Activated B cell treated with CpG ODN at 0.5 μM for 24 hours (primary cell): ENCODE measurements at regions of chr6 and their contacts with region 1.

Region 1: GRCh38 chr6:30730601-30731435 is 10.7 kb downstream of the TUBB start:
- DNase-seq: peak; percentile 69
- ATAC-seq: peak; percentile 89
- H3K4me3 Mint-ChIP-seq: peak overlapping the region; percentile 41
- H3K27ac Mint-ChIP-seq: no peak overlapping the region
- H3K4me1 Mint-ChIP-seq: peaks cover 27% of the 10 kb centered on the region
- H3K27me3 Mint-ChIP-seq: no peaks in the 10 kb centered on the region
- CTCF ChIP-seq: peak; percentile 23

Region 2: DNA sequence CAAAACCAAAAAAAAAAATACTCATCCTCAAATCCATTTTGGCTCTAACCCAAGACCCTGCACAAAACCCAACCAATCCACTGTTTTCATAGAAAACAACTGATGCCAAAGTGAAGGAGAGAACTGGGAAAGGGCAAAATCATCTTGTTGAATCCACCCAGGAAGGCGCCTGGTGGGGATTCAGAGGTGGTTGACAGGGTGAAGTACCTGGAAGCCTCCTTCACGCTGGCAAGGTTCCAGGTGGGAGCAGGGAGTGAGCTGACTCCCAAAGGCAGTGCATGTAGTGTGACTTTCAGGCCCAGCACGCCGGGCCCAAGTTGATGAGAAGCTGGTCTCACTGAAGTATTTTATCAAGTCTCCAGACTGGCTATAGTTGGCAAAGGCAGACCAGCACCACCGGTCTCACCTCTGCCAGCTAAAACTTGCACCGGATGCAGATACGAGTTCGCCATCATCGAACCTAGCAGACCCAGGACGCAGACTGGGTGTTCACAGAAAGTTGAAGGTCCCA is 130.3 kb before region 1 on chr6:
- CTCF ChIA-PET with region 1: interaction called, 15 read pairs
- POLR2A ChIA-PET with region 1: no interaction called
- intact Hi-C with region 1: no loop called
- DNase-seq: no peak
- ATAC-seq: no peak
- H3K4me3 Mint-ChIP-seq: no peak overlapping the region
- H3K27ac Mint-ChIP-seq: no peak overlapping the region
- H3K4me1 Mint-ChIP-seq: peaks cover 9% of the 10 kb centered on the region
- H3K27me3 Mint-ChIP-seq: no peaks in the 10 kb centered on the region
- CTCF ChIP-seq: no peak

Region 3: DNA sequence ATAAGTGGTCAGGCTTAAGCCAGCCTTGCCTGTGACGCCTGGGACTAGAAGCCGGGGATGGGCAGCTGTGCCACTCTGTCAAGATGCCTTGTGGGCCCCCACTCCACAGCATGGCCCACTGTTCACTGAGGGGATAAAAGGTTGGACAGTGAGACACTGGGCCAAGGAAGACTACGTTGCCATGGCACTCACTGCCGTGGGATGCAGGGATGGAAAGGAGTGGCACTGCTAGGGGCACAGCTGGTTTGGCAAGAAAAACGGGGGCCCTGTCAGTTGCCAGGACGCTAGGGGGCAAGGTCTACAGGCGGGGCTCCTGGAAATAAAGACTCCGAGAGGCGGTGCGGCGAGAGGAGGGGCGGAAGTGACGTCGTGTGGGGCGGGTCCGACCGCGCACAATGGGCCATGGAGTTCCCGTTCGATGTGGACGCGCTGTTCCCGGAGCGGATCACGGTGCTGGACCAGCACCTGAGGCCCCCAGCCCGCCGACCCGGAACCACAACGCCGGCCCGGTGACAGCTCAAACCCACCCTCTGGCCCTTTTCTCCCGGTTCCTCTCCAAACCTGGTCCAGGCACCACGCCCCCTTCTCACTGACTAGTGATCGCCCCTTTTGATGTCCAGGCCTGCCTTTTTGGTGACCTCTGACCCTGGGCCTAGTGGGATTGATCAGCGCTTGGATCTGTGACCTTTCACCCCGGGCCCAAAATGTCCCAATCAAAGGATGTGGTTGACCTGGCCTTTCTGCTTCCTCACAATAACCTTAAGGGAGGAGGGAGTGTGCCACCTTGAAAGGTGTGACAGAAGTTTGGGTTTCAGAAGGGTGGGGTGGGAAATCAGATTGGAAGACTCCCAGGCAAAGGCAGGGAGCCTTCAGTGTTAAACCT is 104.1 kb before region 1 on chr6 and contains the start of gene ATAT1:
- CTCF ChIA-PET with region 1: interaction called, 11 read pairs
- POLR2A ChIA-PET with region 1: interaction called, 6 read pairs
- intact Hi-C with region 1: no loop called
- DNase-seq: peak; percentile 86
- ATAC-seq: peak; percentile 99
- H3K4me3 Mint-ChIP-seq: peak within 1 kb of the TSS; percentile 90
- H3K27ac Mint-ChIP-seq: peak within 1 kb of the TSS; percentile 89
- H3K4me1 Mint-ChIP-seq: peaks cover 21% of the 10 kb centered on the region
- H3K27me3 Mint-ChIP-seq: no peaks in the 10 kb centered on the region
- CTCF ChIP-seq: no peak
- total RNA-seq, gene ATAT1: 6.9 and 10.3 TPM in 2 replicates

Region 4: GRCh38 chr6:30678964-30679726 is 51.7 kb before region 1 on chr6:
- CTCF ChIA-PET with region 1: interaction called, 576 read pairs
- POLR2A ChIA-PET with region 1: interaction called, 697 read pairs
- intact Hi-C with region 1: no loop called
- DNase-seq: peak; percentile 94
- ATAC-seq: peak; percentile 33
- H3K4me3 Mint-ChIP-seq: peak overlapping the region; percentile 92
- H3K27ac Mint-ChIP-seq: peak overlapping the region; percentile 99
- H3K4me1 Mint-ChIP-seq: peaks cover 62% of the 10 kb centered on the region
- H3K27me3 Mint-ChIP-seq: no peaks in the 10 kb centered on the region
- CTCF ChIP-seq: peak; percentile 73